SK-N-SH (cell line): ENCODE measurements at regions of chr1 and their contacts with region 1.

Region 1: DNA sequence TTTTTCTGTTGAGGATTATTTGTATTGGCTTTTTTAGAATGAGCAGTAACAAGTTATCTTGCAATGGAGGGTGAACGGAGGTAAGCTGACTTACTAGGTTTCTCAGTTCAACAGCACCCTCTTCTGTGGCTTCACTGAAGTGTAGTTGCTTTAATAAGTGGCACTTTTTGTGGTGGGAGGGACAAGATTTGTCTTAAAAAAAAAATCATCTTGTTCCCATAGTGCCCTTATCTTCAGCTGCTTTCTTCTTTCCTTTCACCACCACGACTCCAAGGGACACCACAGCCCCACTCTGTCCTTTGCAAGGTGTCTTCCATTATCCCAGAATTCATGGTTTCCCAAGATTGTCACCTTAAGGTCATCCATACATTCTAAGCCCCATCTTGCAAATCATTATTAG is 92.9 kb downstream of the PIGK start:
- DNase-seq: peak; percentile 56
- H3K4me3 ChIP-seq: peak overlapping the region in 1 of 2 experiments; percentile 5; a peak in 1 of 4 replicates
- H3K27ac ChIP-seq: no peak overlapping the region
- H3K4me1 ChIP-seq: no peaks in the 10 kb centered on the region; a peak in 2 of 4 replicates
- H3K27me3 ChIP-seq: no peaks in the 10 kb centered on the region
- CTCF ChIP-seq: peak; percentile 84
- EP300 ChIP-seq: no peak
- RAD21 ChIP-seq: peak; percentile 96

Region 2: GRCh38 chr1:76868154-76868882 is 258.0 kb before region 1 on chr1:
- CTCF ChIA-PET with region 1: interaction called, 11 read pairs
- POLR2A ChIA-PET with region 1: no interaction called
- DNase-seq: peak; percentile 88
- H3K4me3 ChIP-seq: peak overlapping the region; percentile 89 to 93
- H3K27ac ChIP-seq: peak overlapping the region; percentile 61 to 88; a peak in 3 of 4 replicates
- H3K4me1 ChIP-seq: peaks cover 5 to 10% of the 10 kb centered on the region in 2 experiments; a peak in 3 of 4 replicates
- H3K27me3 ChIP-seq: no peaks in the 10 kb centered on the region
- CTCF ChIP-seq: peak; percentile 48
- EP300 ChIP-seq: no peak
- RAD21 ChIP-seq: peak; percentile 35

Region 3: GRCh38 chr1:76949503-76949902 is 176.8 kb before region 1 on chr1:
- CTCF ChIA-PET with region 1: no interaction called
- POLR2A ChIA-PET with region 1: no interaction called
- DNase-seq: no peak
- H3K4me3 ChIP-seq: no peak overlapping the region
- H3K27ac ChIP-seq: peak overlapping the region in 1 of 2 experiments; percentile 42; a peak in 1 of 4 replicates
- H3K4me1 ChIP-seq: no peaks in the 10 kb centered on the region
- H3K27me3 ChIP-seq: no peaks in the 10 kb centered on the region
- CTCF ChIP-seq: no peak
- EP300 ChIP-seq: peak in 1 of 2 experiments; percentile 44; a peak in 1 of 4 replicates
- RAD21 ChIP-seq: no peak

Region 4: GRCh38 chr1:77143529-77144121 is 17.3 kb after region 1 on chr1:
- CTCF ChIA-PET with region 1: interaction called, 16 read pairs
- POLR2A ChIA-PET with region 1: no interaction called
- DNase-seq: peak; percentile 15
- H3K4me3 ChIP-seq: no peak overlapping the region
- H3K27ac ChIP-seq: no peak overlapping the region
- H3K4me1 ChIP-seq: no peaks in the 10 kb centered on the region
- H3K27me3 ChIP-seq: no peaks in the 10 kb centered on the region
- CTCF ChIP-seq: peak; percentile 75
- EP300 ChIP-seq: no peak
- RAD21 ChIP-seq: peak; percentile 66

Region 5: DNA sequence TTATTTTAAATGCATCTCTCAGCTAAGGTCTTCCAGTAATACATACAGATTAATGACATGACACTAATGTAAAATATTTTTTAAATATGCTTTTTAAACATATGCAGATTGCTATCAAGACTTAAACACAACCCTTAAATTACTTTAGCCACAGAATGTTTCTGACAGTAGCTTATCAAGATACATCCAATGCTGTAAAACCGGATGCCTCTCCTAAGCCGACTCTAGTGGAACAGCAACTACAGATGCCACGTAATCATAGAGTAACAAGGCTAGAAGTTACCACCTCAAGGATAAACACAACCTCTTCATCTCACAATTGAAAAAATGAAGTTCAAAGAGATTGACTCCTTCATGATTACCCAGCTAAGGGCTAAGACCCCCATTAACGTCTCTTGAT is 487.7 kb after region 1 on chr1:
- CTCF ChIA-PET with region 1: no interaction called
- POLR2A ChIA-PET with region 1: no interaction called
- DNase-seq: peak; percentile 10
- H3K4me3 ChIP-seq: no peak overlapping the region
- H3K27ac ChIP-seq: peak overlapping the region in 1 of 2 experiments; percentile 53; a peak in 2 of 4 replicates
- H3K4me1 ChIP-seq: peaks cover 0 to 6% of the 10 kb centered on the region in 2 experiments; a peak in 3 of 4 replicates
- H3K27me3 ChIP-seq: no peaks in the 10 kb centered on the region
- CTCF ChIP-seq: no peak
- EP300 ChIP-seq: no peak
- RAD21 ChIP-seq: no peak